ENCODE measurements at regions of chr2 and their contacts with region 1.

Region 1: DNA sequence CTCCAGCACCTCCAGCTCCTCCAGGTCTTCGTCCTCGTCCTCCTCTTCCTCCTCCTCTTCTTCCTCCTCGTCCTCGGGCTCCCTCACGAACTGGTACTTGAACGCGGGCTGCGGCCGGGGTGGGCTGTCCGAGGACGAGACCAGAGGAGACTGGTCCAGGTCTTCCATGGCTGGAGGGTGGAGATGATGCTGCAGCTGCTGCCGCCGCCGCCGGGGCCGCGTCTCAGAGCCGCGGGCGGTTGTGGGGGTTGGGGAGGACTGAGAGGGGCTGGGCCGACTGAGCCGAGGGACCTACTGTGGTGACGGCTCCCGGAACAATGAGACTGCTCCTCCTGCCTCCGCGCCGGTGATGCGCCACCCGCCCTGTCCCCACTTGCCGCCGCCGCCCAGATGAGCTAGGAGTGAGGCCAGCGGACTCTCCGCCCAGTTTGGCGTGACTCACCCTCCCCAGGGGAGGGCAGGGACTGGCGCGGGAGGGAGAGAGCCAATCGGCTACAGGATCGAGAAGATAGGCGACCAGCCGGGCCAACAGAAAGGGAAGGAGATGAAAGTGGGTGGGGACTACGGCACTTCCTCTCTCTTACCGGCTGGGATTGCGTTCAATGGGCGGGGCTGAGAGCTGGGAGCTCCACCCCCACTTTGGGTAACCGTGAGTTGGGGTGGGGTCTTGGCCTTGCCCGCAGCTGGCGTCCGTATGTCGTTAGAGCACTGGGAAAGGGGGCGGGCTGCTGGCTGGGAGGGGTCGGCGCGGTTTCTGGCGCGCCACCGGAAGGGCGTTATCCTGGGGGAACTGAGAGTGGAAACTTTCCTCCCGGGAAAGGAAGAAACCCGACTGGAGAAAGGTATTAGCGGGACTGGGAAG is at the start of gene RTN4:
- DNase-seq: peak; percentile 98
- ATAC-seq: peak; percentile 85
- H3K4me3 ChIP-seq: peak within 1 kb of the TSS; percentile 65 to 84
- H3K27ac ChIP-seq: peak within 1 kb of the TSS; percentile 100
- H3K4me1 ChIP-seq: peaks cover 27% of the 10 kb centered on the region
- H3K27me3 ChIP-seq: no peaks in the 10 kb centered on the region
- CTCF ChIP-seq: no peak
- total RNA-seq, gene RTN4: 513 TPM

Region 2: GRCh38 chr2:54966165-54966832 is 84.1 kb before region 1 on chr2:
- CTCF ChIA-PET with region 1: no interaction called
- POLR2A ChIA-PET with region 1: no interaction called
- in situ Hi-C with region 1: no loop called
- intact Hi-C with region 1: no loop called
- DNase-seq: no peak
- ATAC-seq: peak; percentile 24; the same call in 1 of the 2 replicates
- H3K4me3 ChIP-seq: no peak overlapping the region
- H3K27ac ChIP-seq: peak overlapping the region; percentile 77
- H3K4me1 ChIP-seq: peaks cover 34% of the 10 kb centered on the region
- H3K27me3 ChIP-seq: no peaks in the 10 kb centered on the region
- CTCF ChIP-seq: no peak

Region 3: DNA sequence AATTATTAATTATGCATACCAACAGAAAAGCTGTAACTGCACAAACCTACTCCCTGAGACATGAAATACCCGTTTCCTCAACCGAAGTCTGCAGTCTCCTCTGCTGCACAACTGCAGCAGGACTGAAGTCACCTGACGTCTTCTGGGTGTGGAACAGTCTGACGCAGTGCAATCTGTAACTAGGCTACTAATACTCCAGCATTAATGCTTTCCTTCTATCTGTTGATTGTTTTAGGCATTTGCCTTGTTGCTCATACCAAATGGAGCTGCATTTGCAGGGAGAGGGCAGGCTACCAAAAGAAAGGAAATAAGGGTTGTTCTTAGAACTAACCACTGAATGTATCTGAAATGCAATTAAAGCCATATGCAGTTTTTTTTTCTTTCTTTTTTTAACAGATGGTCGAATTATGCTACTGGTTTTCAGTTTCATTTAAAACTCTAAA is 40.2 kb before region 1 on chr2:
- CTCF ChIA-PET with region 1: interaction called, 5 read pairs
- POLR2A ChIA-PET with region 1: interaction called, 4 read pairs
- in situ Hi-C with region 1: no loop called
- intact Hi-C with region 1: loop called (anchors 5 kb)
- DNase-seq: no peak
- ATAC-seq: peak; percentile 87
- H3K4me3 ChIP-seq: peak overlapping the region; percentile 38 to 51
- H3K27ac ChIP-seq: peak overlapping the region; percentile 91
- H3K4me1 ChIP-seq: peaks cover 99% of the 10 kb centered on the region
- H3K27me3 ChIP-seq: no peaks in the 10 kb centered on the region
- CTCF ChIP-seq: no peak

Region 4: GRCh38 chr2:55109219-55109891 is 59.0 kb after region 1 on chr2:
- CTCF ChIA-PET with region 1: no interaction called
- POLR2A ChIA-PET with region 1: interaction called, 7 read pairs
- in situ Hi-C with region 1: no loop called
- intact Hi-C with region 1: loop called (anchors 5 kb)
- DNase-seq: no peak
- ATAC-seq: peak; percentile 85
- H3K4me3 ChIP-seq: no peak overlapping the region; a peak in 1 of 4 replicates
- H3K27ac ChIP-seq: peak overlapping the region; percentile 73
- H3K4me1 ChIP-seq: peaks cover 43% of the 10 kb centered on the region
- H3K27me3 ChIP-seq: no peaks in the 10 kb centered on the region
- CTCF ChIP-seq: no peak

Region 5: GRCh38 chr2:55168221-55169154 is 118.1 kb after region 1 on chr2:
- CTCF ChIA-PET with region 1: interaction called, 5 read pairs
- POLR2A ChIA-PET with region 1: interaction called, 3 read pairs
- in situ Hi-C with region 1: loop called (anchors 25 kb)
- intact Hi-C with region 1: loop called (anchors 2 kb)
- DNase-seq: no peak
- ATAC-seq: peak; percentile 80
- H3K4me3 ChIP-seq: no peak overlapping the region
- H3K27ac ChIP-seq: peak overlapping the region; percentile 60
- H3K4me1 ChIP-seq: peaks cover 23% of the 10 kb centered on the region
- H3K27me3 ChIP-seq: no peaks in the 10 kb centered on the region
- CTCF ChIP-seq: peak; percentile 77

Measured in Panc1 (cell line).